ENCODE measurements at regions of chr6 and their contacts with region 1.

Region 1: GRCh38 chr6:161870236-161870901 is 596.5 kb upstream of the AGPAT4 start:
- DNase-seq: no peak
- ATAC-seq: no peak
- H3K4me3 ChIP-seq: no peak overlapping the region
- H3K27ac ChIP-seq: no peak overlapping the region
- H3K4me1 ChIP-seq: no peaks in the 10 kb centered on the region
- H3K27me3 ChIP-seq: no peaks in the 10 kb centered on the region
- CTCF ChIP-seq: no peak
- POLR2A ChIP-seq: no peak

Region 2: DNA sequence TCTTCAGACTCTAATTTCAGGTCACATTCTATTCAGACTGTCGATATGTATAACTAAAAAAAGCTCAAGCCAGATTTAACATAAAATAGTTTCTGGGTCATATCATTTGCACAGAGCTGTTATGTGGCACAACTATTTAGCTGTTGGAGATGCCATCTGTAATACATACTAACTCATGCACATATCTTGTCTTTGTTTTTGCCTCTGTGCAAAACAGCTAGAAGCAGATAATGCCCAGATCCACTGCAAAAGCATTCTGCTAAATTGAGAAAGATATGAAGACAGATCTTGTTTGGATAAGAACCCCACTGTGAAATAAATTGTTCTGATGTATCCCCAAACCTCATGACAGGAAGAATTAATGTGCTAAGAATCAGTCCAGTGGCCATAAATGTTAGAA is 73.7 kb before region 1 on chr6:
- intact Hi-C with region 1: loop called in 1 of 10 experiments (anchors 2 kb)
- DNase-seq: no peak
- ATAC-seq: no peak
- H3K4me3 ChIP-seq: no peak overlapping the region
- H3K27ac ChIP-seq: no peak overlapping the region
- H3K4me1 ChIP-seq: no peaks in the 10 kb centered on the region
- H3K27me3 ChIP-seq: no peaks in the 10 kb centered on the region
- CTCF ChIP-seq: no peak
- POLR2A ChIP-seq: no peak

Region 3: DNA sequence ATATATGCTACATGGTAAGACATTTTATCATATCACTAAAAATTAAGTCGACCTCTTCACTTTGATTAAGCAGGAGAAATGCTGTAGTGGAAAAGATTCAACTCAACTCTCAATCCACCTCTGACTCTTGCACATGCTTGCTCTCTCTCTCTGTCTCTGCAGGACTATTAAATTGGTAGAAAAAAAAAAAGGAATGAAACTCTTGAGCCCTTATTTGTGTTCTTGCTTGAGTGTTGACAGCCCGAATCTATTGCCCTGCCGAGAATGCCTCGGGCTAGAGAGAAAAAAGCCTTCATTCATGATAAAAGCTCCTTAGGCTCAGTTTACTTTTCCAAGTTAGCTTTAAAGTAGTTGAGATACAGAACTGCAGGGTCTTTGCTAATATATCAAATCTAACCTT is 135.0 kb after region 1 on chr6:
- intact Hi-C with region 1: loop called in 1 of 10 experiments (anchors 10 kb)
- DNase-seq: no peak
- ATAC-seq: no peak
- H3K4me3 ChIP-seq: no peak overlapping the region
- H3K27ac ChIP-seq: no peak overlapping the region
- H3K4me1 ChIP-seq: no peaks in the 10 kb centered on the region
- H3K27me3 ChIP-seq: no peaks in the 10 kb centered on the region
- CTCF ChIP-seq: no peak
- POLR2A ChIP-seq: no peak

Measured in heart left ventricle (tissue), 16 donors.